Prostate gland (tissue), 2 donors: ENCODE measurements at regions of chr14 and their contacts with region 1.

Region 1: GRCh38 chr14:92513204-92513973 is at the start of gene RIN3:
- DNase-seq: no peak
- H3K4me3 ChIP-seq: peak within 1 kb of the TSS; percentile 46 to 67
- H3K27ac ChIP-seq: peak within 1 kb of the TSS; percentile 60 to 75
- H3K4me1 ChIP-seq: no peaks in the 10 kb centered on the region
- H3K27me3 ChIP-seq: no peaks in the 10 kb centered on the region
- CTCF ChIP-seq: no peak
- POLR2A ChIP-seq: no peak
- total RNA-seq, gene RIN3: 8.8 to 41.6 TPM

Region 2: DNA sequence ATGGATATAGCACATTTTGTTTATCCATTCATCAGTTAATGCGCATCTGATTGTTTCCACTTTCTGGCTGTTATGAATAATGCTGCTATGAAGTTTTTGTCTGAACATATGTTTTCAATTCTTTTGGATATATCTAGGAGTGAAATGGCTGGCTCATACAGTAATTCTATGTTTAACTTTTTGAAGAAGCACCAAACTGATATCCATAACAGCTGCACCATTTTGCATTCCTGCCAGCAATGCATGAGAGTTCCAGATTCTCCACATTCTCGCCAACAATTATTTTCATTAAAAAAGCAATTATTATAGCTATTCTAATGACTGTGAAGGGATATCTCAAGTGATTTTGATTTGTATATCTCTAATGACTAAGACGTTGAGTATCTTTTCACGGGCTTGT is 913.4 kb before region 1 on chr14:
- intact Hi-C with region 1: no loop called
- DNase-seq: no peak
- H3K4me3 ChIP-seq: no peak overlapping the region
- H3K27ac ChIP-seq: no peak overlapping the region
- H3K4me1 ChIP-seq: no peaks in the 10 kb centered on the region
- H3K27me3 ChIP-seq: no peaks in the 10 kb centered on the region
- CTCF ChIP-seq: no peak
- POLR2A ChIP-seq: no peak

Region 3: DNA sequence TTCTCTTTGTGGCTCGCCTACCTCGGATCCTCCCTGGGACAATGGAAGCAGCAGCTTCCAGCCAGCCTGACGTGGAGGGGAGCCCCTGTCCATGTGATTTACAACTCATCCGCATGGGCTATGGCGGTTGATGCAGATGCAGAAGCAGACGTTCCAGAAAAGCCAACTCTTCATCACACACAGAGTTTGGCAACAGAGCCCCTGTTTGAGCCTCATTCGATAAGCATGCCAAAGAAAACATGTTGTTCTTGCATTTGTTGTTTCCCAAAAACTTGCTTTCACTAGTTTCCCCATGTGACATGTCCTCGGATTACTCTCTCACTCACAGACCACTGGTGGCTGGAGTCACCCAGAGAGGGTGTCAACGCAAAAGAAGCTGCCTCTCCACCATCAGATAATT is 629.6 kb before region 1 on chr14:
- intact Hi-C with region 1: no loop called
- DNase-seq: no peak
- H3K4me3 ChIP-seq: no peak overlapping the region
- H3K27ac ChIP-seq: peak overlapping the region in 1 of 2 donors; percentile 27
- H3K4me1 ChIP-seq: no peaks in the 10 kb centered on the region
- H3K27me3 ChIP-seq: no peaks in the 10 kb centered on the region
- CTCF ChIP-seq: no peak
- POLR2A ChIP-seq: no peak

Region 4: DNA sequence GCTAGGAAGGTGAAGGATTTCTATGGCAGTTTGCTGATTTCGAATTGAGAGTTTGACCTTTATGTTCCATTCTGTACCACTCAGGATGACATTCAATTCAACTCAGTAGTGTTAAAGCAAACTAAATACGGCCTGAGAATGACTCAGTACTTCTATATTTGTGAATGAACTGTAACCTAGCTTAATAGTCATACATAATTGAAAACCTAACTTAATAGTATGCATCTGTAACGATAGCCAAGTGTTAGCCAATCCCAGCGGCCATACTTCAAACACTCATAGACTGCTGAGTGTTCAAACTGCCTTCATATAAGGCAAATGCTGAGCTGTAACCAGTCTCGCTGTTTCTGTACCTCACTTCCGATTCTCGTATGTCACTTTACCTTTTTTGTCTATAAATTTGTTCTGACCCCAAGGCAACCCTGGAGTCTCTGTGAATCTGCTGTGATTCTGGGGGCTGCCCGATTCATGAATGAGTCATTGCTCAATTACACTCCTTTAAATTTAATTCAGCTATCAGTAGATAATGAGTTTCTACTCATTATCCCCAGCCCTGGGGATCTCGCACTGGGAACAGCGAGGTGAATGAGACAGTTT is 288.9 kb before region 1 on chr14:
- intact Hi-C with region 1: no loop called
- DNase-seq: no peak
- H3K4me3 ChIP-seq: no peak overlapping the region
- H3K27ac ChIP-seq: no peak overlapping the region
- H3K4me1 ChIP-seq: no peaks in the 10 kb centered on the region
- H3K27me3 ChIP-seq: no peaks in the 10 kb centered on the region
- CTCF ChIP-seq: no peak
- POLR2A ChIP-seq: no peak

Region 5: DNA sequence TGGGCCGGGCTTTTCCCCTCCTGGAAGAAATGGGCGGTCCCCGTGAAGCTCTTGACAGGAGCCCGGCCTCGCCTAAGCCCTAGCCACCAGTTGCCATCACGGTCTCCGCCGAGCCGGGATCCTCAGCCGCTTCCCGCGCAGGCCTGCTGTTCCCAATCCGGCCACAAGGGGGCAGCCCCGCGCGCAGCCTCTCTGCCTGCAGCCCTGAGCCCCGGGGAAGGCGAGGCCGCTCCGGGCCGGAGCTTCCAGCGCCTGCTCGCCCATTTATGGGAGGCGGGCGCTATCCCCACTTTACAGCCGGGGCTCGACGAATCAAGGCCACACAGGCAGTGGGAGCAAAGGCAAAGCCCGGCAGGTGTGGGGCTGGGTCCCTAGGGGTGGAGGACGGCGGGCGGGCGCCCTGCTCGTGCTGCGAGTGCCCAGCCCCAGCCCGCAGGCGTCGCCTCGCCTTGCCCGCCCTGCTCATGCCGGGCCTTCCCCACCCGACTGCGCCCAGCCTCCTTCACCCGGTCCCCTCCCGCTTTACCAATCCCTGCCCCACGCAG is 173.6 kb after region 1 on chr14:
- intact Hi-C with region 1: loop called (anchors 10 kb)
- DNase-seq: peak; percentile 69
- H3K4me3 ChIP-seq: peak overlapping the region; percentile 18 to 33
- H3K27ac ChIP-seq: peak overlapping the region in 1 of 2 donors; percentile 0
- H3K4me1 ChIP-seq: peaks cover 2% of the 10 kb centered on the region
- H3K27me3 ChIP-seq: no peaks in the 10 kb centered on the region
- CTCF ChIP-seq: peak; percentile 71 to 94 (median 83)
- POLR2A ChIP-seq: no peak